Activated CD4-positive, alpha-beta memory T cell treated with anti-CD3 and anti-CD28 coated beads, Interleukin-2, amount 10 ng/mL, durations not matched to agents 7 days and 5 days (primary cell): ENCODE measurements at regions of chr6 and their contacts with region 1.

Region 1: DNA sequence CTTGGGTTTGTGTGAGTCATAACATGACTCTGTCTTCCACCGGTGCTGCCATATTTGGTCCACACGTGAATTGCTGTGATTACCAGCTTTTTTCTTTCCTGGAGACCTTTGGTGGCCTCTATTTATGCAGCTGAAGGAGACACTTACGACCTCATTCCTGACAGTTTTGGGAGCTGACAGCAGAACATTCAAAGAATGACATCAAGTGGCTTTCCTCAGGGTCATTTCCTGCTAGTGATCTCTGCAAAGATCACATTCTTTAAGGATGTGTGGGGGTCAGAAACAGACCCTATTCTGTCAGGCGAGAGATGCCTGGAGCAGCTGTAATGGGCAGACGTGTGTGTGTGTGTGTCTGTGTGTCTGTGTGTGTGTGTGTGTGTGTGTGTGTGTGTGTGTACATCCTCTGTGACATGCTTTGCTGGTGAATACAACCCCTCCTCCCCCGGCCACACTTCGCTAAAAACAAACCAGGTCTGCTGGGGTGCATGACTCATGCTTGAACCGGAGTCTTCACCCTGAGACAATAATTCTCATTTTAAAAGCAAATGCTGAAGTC is 115.6 kb downstream of the TMEM170B start:
- DNase-seq: peak; percentile 61
- H3K4me3 Mint-ChIP-seq: no peak overlapping the region
- H3K27ac Mint-ChIP-seq: peak overlapping the region; percentile 28
- H3K4me1 Mint-ChIP-seq: peaks cover 24% of the 10 kb centered on the region
- H3K27me3 Mint-ChIP-seq: peaks cover 11% of the 10 kb centered on the region

Region 2: GRCh38 chr6:12289933-12290820 is 637.1 kb after region 1 on chr6 and contains the start of gene EDN1:
- CTCF ChIA-PET with region 1: interaction called, 56 read pairs
- POLR2A ChIA-PET with region 1: interaction called, 3 read pairs
- DNase-seq: peak; percentile 55
- H3K4me3 Mint-ChIP-seq: peak within 1 kb of the TSS; percentile 62
- H3K27ac Mint-ChIP-seq: peak within 1 kb of the TSS; percentile 3
- H3K4me1 Mint-ChIP-seq: peaks cover 13% of the 10 kb centered on the region
- H3K27me3 Mint-ChIP-seq: peaks cover 46% of the 10 kb centered on the region
- total RNA-seq, gene EDN1: 0.10 TPM in 1 of 2 experiments, not detected in the other

Region 3: GRCh38 chr6:12605888-12606345 is 952.8 kb after region 1 on chr6:
- CTCF ChIA-PET with region 1: interaction called, 27 read pairs
- POLR2A ChIA-PET with region 1: no interaction called
- DNase-seq: peak; percentile 45
- H3K4me3 Mint-ChIP-seq: no peak overlapping the region
- H3K27ac Mint-ChIP-seq: no peak overlapping the region
- H3K4me1 Mint-ChIP-seq: peaks cover 13% of the 10 kb centered on the region
- H3K27me3 Mint-ChIP-seq: peaks cover 4% of the 10 kb centered on the region